ENCODE measurements at regions of chr17 and their contacts with region 1.

Region 1: GRCh38 chr17:4143563-4144421 is 795 bp downstream of the CYB5D2 start:
- DNase-seq: peak; percentile 91
- H3K4me3 Mint-ChIP-seq: peak overlapping the region; percentile 99
- H3K27ac Mint-ChIP-seq: peak overlapping the region; percentile 100
- H3K4me1 Mint-ChIP-seq: peaks cover 42% of the 10 kb centered on the region
- H3K27me3 Mint-ChIP-seq: no peaks in the 10 kb centered on the region

Region 2: DNA sequence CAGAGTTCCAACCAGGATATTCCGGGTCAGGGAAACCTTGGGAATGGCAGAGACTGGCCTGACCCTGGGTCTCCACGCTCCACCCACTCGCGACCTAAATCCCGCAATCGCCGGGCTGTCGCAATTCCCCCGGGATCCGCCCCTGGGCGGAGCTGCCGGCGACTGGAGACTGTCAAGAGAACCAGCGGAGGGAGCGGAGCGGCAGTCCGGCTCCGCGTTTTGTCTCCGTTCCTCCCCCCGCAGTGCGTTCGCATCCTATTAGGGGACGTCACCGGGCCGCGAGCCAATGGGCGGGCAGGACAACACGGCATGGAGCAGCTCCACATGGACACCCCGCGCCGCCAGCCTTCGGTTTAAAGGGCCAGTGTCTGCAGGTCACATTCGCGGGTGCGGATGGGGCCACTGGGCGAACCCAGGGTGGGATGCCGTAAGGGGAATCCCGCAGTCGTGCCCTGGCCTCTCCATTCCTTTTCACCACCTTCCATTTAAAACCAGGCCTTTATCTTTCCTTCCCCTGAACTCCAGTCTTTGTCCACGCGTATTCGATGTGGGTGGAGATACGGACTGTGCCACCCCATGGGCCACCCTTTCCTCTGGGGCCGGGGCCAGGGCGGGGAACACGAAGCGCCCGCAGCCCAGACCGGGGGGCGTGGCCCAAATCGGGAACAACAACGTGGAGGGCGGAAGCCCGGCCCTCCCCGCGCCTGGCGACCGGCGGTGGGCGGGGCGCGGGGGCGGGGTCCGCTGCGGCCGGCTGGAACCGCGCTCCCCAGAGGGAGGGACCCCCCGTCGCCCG is 1742.2 kb before region 1 on chr17:
- CTCF ChIA-PET with region 1: no interaction called
- intact Hi-C with region 1: loop called (anchors 10 kb)
- DNase-seq: peak; percentile 100
- H3K4me3 Mint-ChIP-seq: peak overlapping the region; percentile 98
- H3K27ac Mint-ChIP-seq: peak overlapping the region; percentile 96
- H3K4me1 Mint-ChIP-seq: peaks cover 37% of the 10 kb centered on the region
- H3K27me3 Mint-ChIP-seq: no peaks in the 10 kb centered on the region

Region 3: GRCh38 chr17:3913531-3914311 is 230.1 kb before region 1 on chr17:
- CTCF ChIA-PET with region 1: no interaction called
- intact Hi-C with region 1: loop called (anchors 1 kb)
- DNase-seq: peak; percentile 90
- H3K4me3 Mint-ChIP-seq: no peak overlapping the region
- H3K27ac Mint-ChIP-seq: no peak overlapping the region
- H3K4me1 Mint-ChIP-seq: peaks cover 50% of the 10 kb centered on the region
- H3K27me3 Mint-ChIP-seq: no peaks in the 10 kb centered on the region

Region 4: GRCh38 chr17:4175921-4176807 is 32.4 kb after region 1 on chr17:
- CTCF ChIA-PET with region 1: no interaction called
- intact Hi-C with region 1: loop called (anchors 1 kb)
- DNase-seq: peak; percentile 59
- H3K4me3 Mint-ChIP-seq: peak overlapping the region; percentile 50
- H3K27ac Mint-ChIP-seq: peak overlapping the region; percentile 95
- H3K4me1 Mint-ChIP-seq: peaks cover 52% of the 10 kb centered on the region
- H3K27me3 Mint-ChIP-seq: no peaks in the 10 kb centered on the region

Region 5: GRCh38 chr17:4709794-4710692 is 566.3 kb after region 1 on chr17 and contains the start of gene ARRB2:
- CTCF ChIA-PET with region 1: no interaction called
- intact Hi-C with region 1: loop called (anchors 10 kb)
- DNase-seq: peak; percentile 97
- H3K4me3 Mint-ChIP-seq: peak within 1 kb of the TSS; percentile 80
- H3K27ac Mint-ChIP-seq: peak within 1 kb of the TSS; percentile 85
- H3K4me1 Mint-ChIP-seq: peaks cover 56% of the 10 kb centered on the region
- H3K27me3 Mint-ChIP-seq: no peaks in the 10 kb centered on the region
- total RNA-seq, gene ARRB2: 169 to 174 TPM

Region 6: GRCh38 chr17:4948931-4949320 is 805.1 kb after region 1 on chr17:
- CTCF ChIA-PET with region 1: no interaction called
- intact Hi-C with region 1: loop called (anchors 5 kb)
- DNase-seq: peak; percentile 78
- H3K4me3 Mint-ChIP-seq: peak overlapping the region; percentile 97
- H3K27ac Mint-ChIP-seq: peak overlapping the region; percentile 99
- H3K4me1 Mint-ChIP-seq: peaks cover 35% of the 10 kb centered on the region
- H3K27me3 Mint-ChIP-seq: no peaks in the 10 kb centered on the region